Aorta (tissue), 5 donors: ENCODE measurements at regions of chr2 and their contacts with region 1.

Region 1: GRCh38 chr2:217650716-217651360 is 352.0 kb downstream of the TNS1 start:
- DNase-seq: peak in 1 of 2 donors; percentile 53
- ATAC-seq: peak; percentile 55
- H3K4me3 ChIP-seq: no peak overlapping the region
- H3K27ac ChIP-seq: peak overlapping the region in 1 of 2 donors; percentile 53
- H3K4me1 ChIP-seq: peaks cover 0 to 2% of the 10 kb centered on the region in 2 donors
- H3K27me3 ChIP-seq: no peaks in the 10 kb centered on the region

Region 2: DNA sequence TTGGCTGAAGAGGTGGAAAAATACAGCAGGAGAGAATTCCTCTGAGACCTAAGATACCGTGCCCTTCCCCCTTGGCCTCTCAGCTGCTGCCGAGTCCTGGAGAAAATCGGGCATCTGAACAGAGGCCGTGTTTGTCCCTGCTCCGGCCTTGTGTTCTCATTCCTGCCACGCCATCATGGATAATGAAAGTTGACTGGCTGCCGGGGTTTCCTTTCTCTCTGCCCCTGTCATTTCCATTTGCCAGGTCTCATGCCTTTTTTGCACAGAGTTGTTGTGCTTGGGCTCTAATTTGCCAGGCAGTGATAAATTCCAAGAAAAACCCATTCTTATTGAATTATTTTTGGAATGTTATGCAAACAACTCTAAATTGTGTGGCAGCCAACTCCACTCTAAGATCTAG is 294.1 kb before region 1 on chr2:
- intact Hi-C with region 1: no loop called
- DNase-seq: peak; percentile 80 to 81
- ATAC-seq: peak; percentile 62
- H3K4me3 ChIP-seq: no peak overlapping the region
- H3K27ac ChIP-seq: peak overlapping the region; percentile 37 to 59
- H3K4me1 ChIP-seq: peaks cover 16 to 23% of the 10 kb centered on the region in 2 donors
- H3K27me3 ChIP-seq: no peaks in the 10 kb centered on the region

Region 3: GRCh38 chr2:217691920-217692666 is 41.3 kb after region 1 on chr2:
- intact Hi-C with region 1: loop called (anchors 5 kb)
- DNase-seq: peak; percentile 88 to 93
- ATAC-seq: peak; percentile 83
- H3K4me3 ChIP-seq: no peak overlapping the region
- H3K27ac ChIP-seq: peak overlapping the region; percentile 6 to 85
- H3K4me1 ChIP-seq: peaks cover 6 to 12% of the 10 kb centered on the region in 2 donors
- H3K27me3 ChIP-seq: no peaks in the 10 kb centered on the region

Region 4: GRCh38 chr2:217713395-217714286 is 62.8 kb after region 1 on chr2:
- intact Hi-C with region 1: loop called (anchors 5 kb)
- DNase-seq: peak; percentile 85 to 93
- ATAC-seq: peak; percentile 93
- H3K4me3 ChIP-seq: no peak overlapping the region
- H3K27ac ChIP-seq: peak overlapping the region in 1 of 2 donors; percentile 29
- H3K4me1 ChIP-seq: peaks cover 0 to 2% of the 10 kb centered on the region in 2 donors
- H3K27me3 ChIP-seq: no peaks in the 10 kb centered on the region

Region 5: GRCh38 chr2:217756375-217757107 is 105.7 kb after region 1 on chr2:
- intact Hi-C with region 1: loop called in 1 of 2 experiments (anchors 5 kb)
- DNase-seq: peak; percentile 84 to 94
- ATAC-seq: peak; percentile 89
- H3K4me3 ChIP-seq: no peak overlapping the region
- H3K27ac ChIP-seq: peak overlapping the region; percentile 24 to 30
- H3K4me1 ChIP-seq: peaks cover 3 to 6% of the 10 kb centered on the region in 2 donors
- H3K27me3 ChIP-seq: no peaks in the 10 kb centered on the region